ENCODE measurements at regions of chr6 and their contacts with region 1.

Region 1: DNA sequence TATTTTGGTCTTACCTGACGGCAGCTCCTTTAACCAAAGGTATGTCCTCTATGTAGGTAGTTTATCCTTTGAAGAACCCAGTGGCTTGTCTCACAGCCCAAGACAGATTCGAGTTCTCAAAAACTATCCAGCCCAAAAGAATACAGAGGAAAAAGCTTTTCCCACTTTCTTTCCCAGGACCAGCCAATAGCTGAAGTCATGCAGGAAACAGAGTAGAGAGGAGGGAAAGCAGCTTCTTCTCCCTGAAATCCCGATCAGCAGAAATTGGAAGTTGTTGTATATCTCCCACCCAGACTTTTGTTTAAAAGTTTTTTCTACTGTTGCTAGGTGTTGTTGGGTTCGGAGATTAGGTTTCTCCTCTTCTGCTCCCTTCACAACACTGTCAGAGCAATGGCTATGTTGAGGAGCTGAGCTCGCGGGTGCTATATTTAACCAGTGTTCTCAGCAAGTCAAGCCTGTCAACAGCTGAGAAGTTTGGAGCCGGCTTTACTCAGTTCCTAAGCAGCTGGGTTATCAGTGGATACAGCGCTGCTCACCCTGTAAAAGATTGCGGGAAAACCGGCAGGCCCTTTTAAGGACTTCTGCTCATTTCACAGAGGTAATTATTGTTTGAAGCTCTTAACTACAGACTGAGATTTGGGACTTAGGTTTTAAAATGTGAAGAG is at the start of gene FILIP1:
- DNase-seq: peak; percentile 62 to 85 (median 83)
- ATAC-seq: peak; percentile 88 to 95 (median 88)
- H3K4me3 ChIP-seq: peak within 1 kb of the TSS; percentile 10 to 68 (median 60)
- H3K27ac ChIP-seq: peak within 1 kb of the TSS; percentile 79 to 95 (median 92)
- H3K4me1 ChIP-seq: peaks cover 0 to 50% (median 28%) of the 10 kb centered on the region in 12 donors
- H3K27me3 ChIP-seq: no peaks in the 10 kb centered on the region
- CTCF ChIP-seq: no peak
- POLR2A ChIP-seq: peak; percentile 66 to 85
- total RNA-seq, gene FILIP1: 91.1 to 230 (median 177) TPM

Region 2: GRCh38 chr6:75418233-75418632 is 75.3 kb before region 1 on chr6:
- intact Hi-C with region 1: loop called in 2 of 10 experiments (anchors 5 kb)
- DNase-seq: no peak
- ATAC-seq: peak in 3 of 4 donors; percentile 35 to 68 (median 67)
- H3K4me3 ChIP-seq: no peak overlapping the region
- H3K27ac ChIP-seq: peak overlapping the region in 9 of 12 donors; percentile 4 to 48 (median 26)
- H3K4me1 ChIP-seq: peaks cover 6 to 92% (median 61%) of the 10 kb centered on the region in 12 donors
- H3K27me3 ChIP-seq: no peaks in the 10 kb centered on the region
- CTCF ChIP-seq: no peak
- POLR2A ChIP-seq: no peak

Region 3: DNA sequence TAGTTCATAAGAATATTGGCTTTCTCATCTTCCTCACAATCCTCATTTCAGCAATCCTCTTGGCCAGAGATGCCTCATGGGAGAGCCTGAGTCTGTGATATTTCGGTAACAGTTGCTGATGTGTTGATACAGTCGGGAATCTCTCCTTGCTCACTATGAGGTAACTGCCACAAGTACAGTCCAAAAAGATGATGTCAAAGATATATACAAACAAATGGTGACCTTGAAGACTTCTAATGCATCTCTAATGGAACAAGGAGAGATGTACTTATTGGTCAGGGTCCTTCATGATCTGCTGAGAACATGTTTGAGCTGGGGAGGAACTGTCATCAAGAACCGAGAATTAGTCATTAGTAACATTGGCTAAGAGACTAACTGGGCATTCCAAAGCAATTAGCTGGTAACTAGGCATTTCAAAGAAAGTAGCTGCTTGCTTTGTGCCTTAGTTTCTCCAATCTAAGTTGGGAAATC is 56.1 kb before region 1 on chr6:
- intact Hi-C with region 1: loop called in 5 of 10 experiments (anchors 5 to 10 kb)
- DNase-seq: peak in 3 of 5 donors; percentile 26 to 35 (median 33)
- ATAC-seq: peak; percentile 65 to 87 (median 76)
- H3K4me3 ChIP-seq: peak overlapping the region in 1 of 12 donors; percentile 12
- H3K27ac ChIP-seq: peak overlapping the region; percentile 50 to 85 (median 72)
- H3K4me1 ChIP-seq: peaks cover 0 to 65% (median 44%) of the 10 kb centered on the region in 12 donors
- H3K27me3 ChIP-seq: no peaks in the 10 kb centered on the region
- CTCF ChIP-seq: no peak
- POLR2A ChIP-seq: no peak

Region 4: GRCh38 chr6:75735491-75736186 is 242.1 kb after region 1 on chr6:
- intact Hi-C with region 1: no loop called
- DNase-seq: no peak
- ATAC-seq: no peak
- H3K4me3 ChIP-seq: no peak overlapping the region
- H3K27ac ChIP-seq: peak overlapping the region in 1 of 12 donors; percentile 37
- H3K4me1 ChIP-seq: peaks cover 0 to 11% (median 0%) of the 10 kb centered on the region in 12 donors
- H3K27me3 ChIP-seq: no peaks in the 10 kb centered on the region
- CTCF ChIP-seq: no peak
- POLR2A ChIP-seq: no peak

Measured in heart left ventricle (tissue), 16 donors.